CD14-positive monocyte (primary cell): ENCODE measurements at regions of chr11 and their contacts with region 1.

Region 1: DNA sequence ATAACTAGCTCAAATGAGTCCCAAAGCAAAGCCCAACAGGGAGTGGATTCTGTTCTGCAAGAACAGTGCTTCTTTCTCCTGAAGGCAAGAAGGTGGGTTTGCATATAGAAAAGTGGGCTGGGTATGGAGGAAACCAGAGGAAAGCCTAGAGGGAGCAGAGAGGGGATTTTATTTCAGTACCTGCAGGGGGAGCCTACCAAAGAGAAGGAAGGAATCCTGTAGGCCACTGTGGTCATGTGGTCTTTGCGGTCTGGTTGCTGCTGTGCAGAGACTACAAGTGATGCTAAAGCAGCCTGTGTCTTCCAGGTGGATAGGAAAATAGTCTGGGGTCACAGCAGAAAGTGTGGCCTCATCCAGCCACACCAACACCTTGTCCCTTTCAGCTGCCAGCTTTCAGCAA is 33.2 kb upstream of the ZBTB16 start:
- DNase-seq: no peak
- H3K4me3 ChIP-seq: no peak overlapping the region
- H3K4me3 Mint-ChIP-seq: no peak overlapping the region
- H3K27ac ChIP-seq: no peak overlapping the region
- H3K27ac Mint-ChIP-seq: no peak overlapping the region
- H3K4me1 ChIP-seq: peaks cover 3 to 4% of the 10 kb centered on the region in 2 donors
- H3K4me1 Mint-ChIP-seq: peaks cover 5% of the 10 kb centered on the region
- H3K27me3 ChIP-seq: peaks cover 0 to 2% of the 10 kb centered on the region in 2 donors
- H3K27me3 Mint-ChIP-seq: peaks cover 5 to 12% (median 8%) of the 10 kb centered on the region in 3 donors
- CTCF ChIP-seq: no peak

Region 2: GRCh38 chr11:113896156-113896879 is 130.0 kb before region 1 on chr11:
- intact Hi-C with region 1: loop called in 1 of 2 experiments (anchors 10 kb)
- DNase-seq: peak; percentile 12 to 45 (median 36)
- H3K4me3 ChIP-seq: no peak overlapping the region
- H3K4me3 Mint-ChIP-seq: no peak overlapping the region
- H3K27ac ChIP-seq: no peak overlapping the region
- H3K27ac Mint-ChIP-seq: no peak overlapping the region
- H3K4me1 ChIP-seq: no peaks in the 10 kb centered on the region
- H3K4me1 Mint-ChIP-seq: peaks cover 5% of the 10 kb centered on the region
- H3K27me3 ChIP-seq: no peaks in the 10 kb centered on the region
- H3K27me3 Mint-ChIP-seq: peaks cover 2 to 7% (median 4%) of the 10 kb centered on the region in 3 donors
- CTCF ChIP-seq: peak; percentile 70